WTC11 (cell line): ENCODE measurements at regions of chr3 and their contacts with region 1.

Region 1: GRCh38 chr3:132268956-132269355 is 48.3 kb upstream of the ACP3 start:
- DNase-seq: peak; percentile 58
- ATAC-seq: peak; percentile 82
- H3K4me3 Mint-ChIP-seq: no peak overlapping the region
- H3K27ac Mint-ChIP-seq: no peak overlapping the region
- H3K4me1 Mint-ChIP-seq: peaks cover 20% of the 10 kb centered on the region
- H3K27me3 Mint-ChIP-seq: no peaks in the 10 kb centered on the region; the same call in 1 of the 2 replicates
- CTCF ChIP-seq: no peak

Region 2: GRCh38 chr3:132154609-132155008 is 114.3 kb before region 1 on chr3:
- CTCF ChIA-PET with region 1: no interaction called
- POLR2A ChIA-PET with region 1: no interaction called
- DNase-seq: no peak
- ATAC-seq: no peak
- H3K4me3 Mint-ChIP-seq: no peak overlapping the region
- H3K27ac Mint-ChIP-seq: no peak overlapping the region
- H3K4me1 Mint-ChIP-seq: no peaks in the 10 kb centered on the region
- H3K27me3 Mint-ChIP-seq: no peaks in the 10 kb centered on the region; the same call in none of the 2 replicates
- CTCF ChIP-seq: no peak

Region 3: DNA sequence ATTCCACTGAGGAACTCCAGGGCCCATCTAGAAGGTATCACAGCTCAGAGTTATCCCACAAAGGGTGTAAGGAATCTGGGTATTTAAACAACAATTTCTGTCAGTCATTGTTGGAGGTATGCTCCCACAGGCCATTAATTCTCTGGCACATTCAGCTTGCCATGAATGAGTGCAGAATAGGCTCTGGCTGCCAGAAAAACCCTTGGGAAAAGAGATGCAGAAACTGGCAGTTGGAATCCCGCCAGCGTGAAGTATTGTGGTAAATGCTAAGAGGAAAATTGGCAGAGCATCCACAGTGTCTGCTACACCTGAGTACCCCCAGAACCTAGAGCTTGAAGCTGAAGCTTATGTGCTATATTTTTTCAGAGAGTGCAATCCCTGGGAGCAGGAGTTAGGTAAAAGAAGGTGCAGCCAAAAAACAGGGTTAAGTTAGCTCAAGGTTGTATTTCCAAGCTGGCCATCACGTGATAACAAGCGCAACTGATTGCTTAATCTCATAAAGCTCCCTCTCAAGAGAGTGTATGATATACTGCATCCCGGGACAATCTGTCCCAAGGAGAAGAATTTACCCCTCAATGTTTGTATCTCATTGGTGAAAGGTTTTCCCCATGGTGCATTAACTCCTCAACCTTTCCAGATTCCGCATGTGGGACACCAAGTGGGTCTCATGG is 46.0 kb before region 1 on chr3:
- CTCF ChIA-PET with region 1: no interaction called
- POLR2A ChIA-PET with region 1: no interaction called
- DNase-seq: no peak
- ATAC-seq: peak; percentile 44
- H3K4me3 Mint-ChIP-seq: no peak overlapping the region
- H3K27ac Mint-ChIP-seq: no peak overlapping the region
- H3K4me1 Mint-ChIP-seq: peaks cover 28% of the 10 kb centered on the region
- H3K27me3 Mint-ChIP-seq: no peaks in the 10 kb centered on the region
- CTCF ChIP-seq: no peak

Region 4: GRCh38 chr3:132253262-132253878 is 15.6 kb before region 1 on chr3:
- CTCF ChIA-PET with region 1: interaction called, 16 read pairs
- POLR2A ChIA-PET with region 1: no interaction called
- DNase-seq: no peak
- ATAC-seq: peak; percentile 74
- H3K4me3 Mint-ChIP-seq: no peak overlapping the region
- H3K27ac Mint-ChIP-seq: no peak overlapping the region
- H3K4me1 Mint-ChIP-seq: peaks cover 6% of the 10 kb centered on the region
- H3K27me3 Mint-ChIP-seq: peaks cover 3% of the 10 kb centered on the region; the same call in 1 of the 2 replicates
- CTCF ChIP-seq: peak; percentile 43

Region 5: GRCh38 chr3:132283440-132283839 is 14.5 kb after region 1 on chr3:
- CTCF ChIA-PET with region 1: interaction called, 18 read pairs
- POLR2A ChIA-PET with region 1: no interaction called
- DNase-seq: no peak
- ATAC-seq: peak; percentile 33
- H3K4me3 Mint-ChIP-seq: no peak overlapping the region
- H3K27ac Mint-ChIP-seq: peak overlapping the region; percentile 65
- H3K4me1 Mint-ChIP-seq: peaks cover 39% of the 10 kb centered on the region
- H3K27me3 Mint-ChIP-seq: no peaks in the 10 kb centered on the region
- CTCF ChIP-seq: no peak